ENCODE measurements at regions of chr9 and their contacts with region 1.

Region 1: DNA sequence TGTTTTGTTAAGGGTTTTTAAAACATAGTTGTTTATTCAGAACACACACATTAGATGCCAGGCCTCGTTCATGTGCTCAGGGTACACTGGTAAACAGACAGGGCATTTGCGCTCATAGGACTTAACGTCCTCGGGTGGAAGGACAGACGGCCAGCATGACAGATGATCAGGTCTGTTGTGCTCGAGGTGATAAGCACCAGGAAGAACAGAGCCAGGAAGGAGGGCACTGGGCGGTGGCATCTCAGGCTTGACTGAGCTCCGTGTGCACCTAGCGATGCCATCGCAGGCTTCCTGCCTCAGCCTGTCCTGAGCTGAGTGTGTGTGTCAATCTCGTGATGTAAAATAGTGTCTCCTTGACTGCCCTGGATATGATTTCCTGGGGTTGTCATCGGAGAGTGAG is 96.5 kb downstream of the EHMT1 start:
- DNase-seq: peak; percentile 78
- ATAC-seq: peak; percentile 92
- H3K4me3 ChIP-seq: peak overlapping the region in 1 of 5 experiments; percentile 12
- H3K4me3 Mint-ChIP-seq: peak overlapping the region; percentile 74
- H3K27ac ChIP-seq: peak overlapping the region; percentile 45 to 64
- H3K27ac Mint-ChIP-seq: peak overlapping the region; percentile 99
- H3K4me1 ChIP-seq: peaks cover 14 to 36% of the 10 kb centered on the region in 2 donors
- H3K4me1 Mint-ChIP-seq: peaks cover 38% of the 10 kb centered on the region
- H3K27me3 ChIP-seq: no peaks in the 10 kb centered on the region
- H3K27me3 Mint-ChIP-seq: no peaks in the 10 kb centered on the region
- CTCF ChIP-seq: no peak

Region 2: GRCh38 chr9:137605121-137606004 is 110.0 kb before region 1 on chr9 and contains the start of gene ARRDC1:
- CTCF ChIA-PET with region 1: no interaction called
- POLR2A ChIA-PET with region 1: no interaction called
- intact Hi-C with region 1: no loop called
- DNase-seq: peak; percentile 93
- ATAC-seq: peak; percentile 86
- H3K4me3 ChIP-seq: peak within 1 kb of the TSS; percentile 34 to 74 (median 60)
- H3K4me3 Mint-ChIP-seq: peak within 1 kb of the TSS; percentile 86
- H3K27ac ChIP-seq: peak within 1 kb of the TSS in 1 of 2 donors; percentile 61
- H3K27ac Mint-ChIP-seq: peak within 1 kb of the TSS; percentile 65
- H3K4me1 ChIP-seq: peaks cover 12 to 25% of the 10 kb centered on the region in 2 donors
- H3K4me1 Mint-ChIP-seq: peaks cover 21% of the 10 kb centered on the region
- H3K27me3 ChIP-seq: no peaks in the 10 kb centered on the region
- H3K27me3 Mint-ChIP-seq: no peaks in the 10 kb centered on the region
- CTCF ChIP-seq: no peak
- total RNA-seq, gene ARRDC1: 89.2 and 96.6 TPM in 2 replicates

Region 3: GRCh38 chr9:137647096-137647714 is 68.1 kb before region 1 on chr9:
- CTCF ChIA-PET with region 1: no interaction called
- POLR2A ChIA-PET with region 1: no interaction called
- intact Hi-C with region 1: no loop called
- DNase-seq: no peak
- ATAC-seq: peak; percentile 33
- H3K4me3 ChIP-seq: peak overlapping the region in 3 of 5 experiments; percentile 21 to 39 (median 27)
- H3K4me3 Mint-ChIP-seq: peak overlapping the region; percentile 71
- H3K27ac ChIP-seq: no peak overlapping the region
- H3K27ac Mint-ChIP-seq: peak overlapping the region; percentile 72
- H3K4me1 ChIP-seq: peaks cover 21 to 28% of the 10 kb centered on the region in 2 donors
- H3K4me1 Mint-ChIP-seq: peaks cover 50% of the 10 kb centered on the region
- H3K27me3 ChIP-seq: no peaks in the 10 kb centered on the region
- H3K27me3 Mint-ChIP-seq: no peaks in the 10 kb centered on the region
- CTCF ChIP-seq: no peak

Region 4: GRCh38 chr9:137682431-137682991 is 32.8 kb before region 1 on chr9:
- CTCF ChIA-PET with region 1: interaction called, 3 read pairs
- POLR2A ChIA-PET with region 1: interaction called, 6 read pairs
- intact Hi-C with region 1: loop called (anchors 2 kb)
- DNase-seq: no peak
- ATAC-seq: peak; percentile 73
- H3K4me3 ChIP-seq: no peak overlapping the region
- H3K4me3 Mint-ChIP-seq: peak overlapping the region; percentile 19
- H3K27ac ChIP-seq: peak overlapping the region; percentile 25 to 90
- H3K27ac Mint-ChIP-seq: peak overlapping the region; percentile 81
- H3K4me1 ChIP-seq: peaks cover 43 to 49% of the 10 kb centered on the region in 2 donors
- H3K4me1 Mint-ChIP-seq: peaks cover 73% of the 10 kb centered on the region
- H3K27me3 ChIP-seq: no peaks in the 10 kb centered on the region
- H3K27me3 Mint-ChIP-seq: no peaks in the 10 kb centered on the region
- CTCF ChIP-seq: no peak

Region 5: DNA sequence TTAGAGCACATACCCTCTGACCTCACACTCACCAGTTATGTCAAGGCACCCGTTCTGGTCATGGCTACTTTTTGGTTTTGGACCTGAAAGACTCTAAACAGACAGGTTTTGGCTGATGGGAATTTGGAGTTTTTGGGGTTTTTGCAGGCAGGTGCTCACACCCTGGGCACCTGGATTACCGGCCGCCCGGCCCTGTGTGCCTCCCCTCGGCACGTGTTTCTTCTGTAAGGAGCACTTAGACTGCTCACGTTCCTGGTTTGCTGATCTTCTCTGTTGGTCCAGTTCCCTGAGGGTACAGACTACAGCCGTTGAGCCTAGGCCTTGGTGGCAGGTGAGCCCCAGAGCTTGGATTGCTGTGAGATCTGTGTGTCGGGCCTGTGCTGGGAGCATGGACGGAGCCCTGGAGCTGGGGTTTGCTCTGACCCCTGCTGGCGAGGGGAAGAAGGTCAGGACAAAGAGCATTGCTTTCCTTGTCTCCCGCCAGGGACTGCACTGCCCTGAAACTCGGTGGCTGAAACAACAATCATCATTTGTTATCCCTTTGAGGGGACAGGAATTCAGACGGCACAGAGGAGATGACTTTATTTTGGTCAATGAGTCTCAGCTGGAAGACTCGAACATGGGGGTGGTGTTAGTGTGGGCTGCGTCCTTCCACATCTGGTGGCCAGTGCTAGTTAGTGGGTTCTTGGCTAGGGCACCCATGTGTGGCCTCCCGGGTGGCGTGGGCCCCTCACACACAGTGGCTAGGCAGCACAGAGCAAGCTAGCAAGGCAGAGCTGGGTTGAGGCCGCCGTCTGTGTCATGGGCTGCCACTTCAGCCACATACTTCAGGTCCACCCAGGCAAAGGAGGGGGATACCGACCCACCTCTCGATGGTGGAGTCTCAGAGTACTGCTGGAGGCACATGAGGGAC is 20.1 kb before region 1 on chr9:
- CTCF ChIA-PET with region 1: interaction called, 16 read pairs
- POLR2A ChIA-PET with region 1: interaction called, 4 read pairs
- intact Hi-C with region 1: no loop called
- DNase-seq: peak; percentile 69
- ATAC-seq: peak; percentile 56
- H3K4me3 ChIP-seq: no peak overlapping the region
- H3K4me3 Mint-ChIP-seq: peak overlapping the region; percentile 49
- H3K27ac ChIP-seq: peak overlapping the region in 1 of 2 donors; percentile 23
- H3K27ac Mint-ChIP-seq: peak overlapping the region; percentile 86
- H3K4me1 ChIP-seq: peaks cover 37 to 43% of the 10 kb centered on the region in 2 donors
- H3K4me1 Mint-ChIP-seq: peaks cover 66% of the 10 kb centered on the region
- H3K27me3 ChIP-seq: no peaks in the 10 kb centered on the region
- H3K27me3 Mint-ChIP-seq: no peaks in the 10 kb centered on the region
- CTCF ChIP-seq: peak; percentile 72

Region 6: GRCh38 chr9:137757613-137758029 is 42.3 kb after region 1 on chr9:
- CTCF ChIA-PET with region 1: interaction called, 6 read pairs
- POLR2A ChIA-PET with region 1: interaction called, 3 read pairs
- intact Hi-C with region 1: loop called (anchors 2 kb)
- DNase-seq: peak; percentile 76
- ATAC-seq: peak; percentile 18
- H3K4me3 ChIP-seq: peak overlapping the region in 2 of 5 experiments; percentile 13 to 23
- H3K4me3 Mint-ChIP-seq: peak overlapping the region; percentile 78
- H3K27ac ChIP-seq: peak overlapping the region; percentile 88
- H3K27ac Mint-ChIP-seq: peak overlapping the region; percentile 99
- H3K4me1 ChIP-seq: peaks cover 60% of the 10 kb centered on the region in 2 donors
- H3K4me1 Mint-ChIP-seq: peaks cover 63% of the 10 kb centered on the region
- H3K27me3 ChIP-seq: no peaks in the 10 kb centered on the region
- H3K27me3 Mint-ChIP-seq: no peaks in the 10 kb centered on the region
- CTCF ChIP-seq: no peak

Region 7: DNA sequence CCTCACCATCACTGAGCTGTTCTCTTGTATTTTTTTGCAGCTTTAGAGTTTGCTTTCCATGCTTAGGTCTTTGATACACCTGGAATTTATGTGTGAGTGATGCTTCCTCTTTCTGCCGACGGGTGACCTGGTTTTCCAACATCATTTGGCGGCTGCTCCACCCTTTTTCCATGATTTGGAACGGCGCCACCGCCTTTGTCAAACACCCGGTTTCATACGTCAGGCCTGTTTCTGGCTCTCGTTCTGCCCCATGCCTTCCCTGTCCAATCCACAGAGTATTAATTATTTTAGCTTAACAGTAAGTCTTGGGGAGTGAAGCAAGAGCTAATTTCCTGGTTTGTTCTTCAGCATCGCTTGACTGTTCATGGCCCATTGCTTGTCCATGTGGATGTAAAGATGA is 192.5 kb after region 1 on chr9:
- CTCF ChIA-PET with region 1: no interaction called
- POLR2A ChIA-PET with region 1: no interaction called
- intact Hi-C with region 1: no loop called
- DNase-seq: no peak
- ATAC-seq: no peak
- H3K4me3 ChIP-seq: no peak overlapping the region
- H3K4me3 Mint-ChIP-seq: no peak overlapping the region
- H3K27ac ChIP-seq: no peak overlapping the region
- H3K27ac Mint-ChIP-seq: no peak overlapping the region
- H3K4me1 ChIP-seq: no peaks in the 10 kb centered on the region
- H3K4me1 Mint-ChIP-seq: no peaks in the 10 kb centered on the region
- H3K27me3 ChIP-seq: peaks cover 0 to 7% (median 0%) of the 10 kb centered on the region in 4 experiments
- H3K27me3 Mint-ChIP-seq: peaks cover 33% of the 10 kb centered on the region
- CTCF ChIP-seq: no peak

Measured in B cell (primary cell).